Activated CD4-positive, alpha-beta T cell treated with anti-CD3 and anti-CD28 coated beads for 36 hours (primary cell): ENCODE measurements at regions of chr1 and their contacts with region 1.

Region 1: DNA sequence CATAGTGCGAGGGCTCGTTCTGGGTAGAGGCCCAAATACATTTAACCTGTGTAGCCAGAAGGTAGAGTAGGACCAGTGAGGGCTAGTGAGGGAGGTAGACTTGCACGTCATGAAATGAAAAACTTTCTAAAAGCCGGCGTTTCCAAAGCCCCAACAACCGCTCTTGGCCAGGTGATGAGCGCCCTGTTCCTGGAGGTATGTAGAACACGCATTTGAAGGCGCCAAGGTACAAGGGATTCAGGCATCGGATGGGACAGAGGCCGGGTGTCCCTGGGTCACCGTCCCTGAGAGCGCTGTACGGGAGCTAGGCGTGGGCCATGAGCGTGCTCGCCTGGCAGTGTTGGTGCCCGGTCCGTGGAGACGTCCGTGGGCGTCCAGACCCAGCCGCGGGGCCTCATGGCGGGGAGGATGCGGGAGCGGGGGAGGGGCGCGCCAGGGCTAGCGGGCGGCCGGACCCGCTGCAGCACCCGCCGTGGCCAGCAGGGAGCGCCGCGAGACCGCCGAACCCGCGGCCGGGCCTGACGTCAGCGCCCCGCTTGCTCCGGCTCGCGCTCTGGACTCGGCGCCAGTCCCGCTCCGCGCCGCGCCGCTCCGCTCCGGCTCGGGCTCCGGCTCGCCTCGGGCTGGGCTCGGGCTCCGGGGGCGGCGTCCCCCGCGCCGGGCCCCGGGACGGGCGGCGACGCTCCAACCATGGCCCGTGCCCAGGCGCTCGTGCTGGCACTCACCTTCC is at the start of gene PTPRU:
- DNase-seq: peak; percentile 91
- ATAC-seq: peak; percentile 85
- H3K4me3 Mint-ChIP-seq: peak within 1 kb of the TSS; percentile 63
- H3K27ac Mint-ChIP-seq: no peak within 1 kb of the TSS
- H3K4me1 Mint-ChIP-seq: peaks cover 15% of the 10 kb centered on the region
- H3K27me3 Mint-ChIP-seq: peaks cover 44% of the 10 kb centered on the region
- total RNA-seq, gene PTPRU: 0.37 to 0.89 TPM

Region 2: GRCh38 chr1:29259802-29260441 is 23.8 kb after region 1 on chr1:
- CTCF ChIA-PET with region 1: interaction called, 3 read pairs
- POLR2A ChIA-PET with region 1: no interaction called
- intact Hi-C with region 1: loop called in 1 of 2 experiments (anchors 1 kb)
- DNase-seq: peak; percentile 69
- ATAC-seq: peak; percentile 63
- H3K4me3 Mint-ChIP-seq: peak overlapping the region; percentile 68
- H3K27ac Mint-ChIP-seq: no peak overlapping the region
- H3K4me1 Mint-ChIP-seq: peaks cover 7% of the 10 kb centered on the region
- H3K27me3 Mint-ChIP-seq: peaks cover 35% of the 10 kb centered on the region

Region 3: DNA sequence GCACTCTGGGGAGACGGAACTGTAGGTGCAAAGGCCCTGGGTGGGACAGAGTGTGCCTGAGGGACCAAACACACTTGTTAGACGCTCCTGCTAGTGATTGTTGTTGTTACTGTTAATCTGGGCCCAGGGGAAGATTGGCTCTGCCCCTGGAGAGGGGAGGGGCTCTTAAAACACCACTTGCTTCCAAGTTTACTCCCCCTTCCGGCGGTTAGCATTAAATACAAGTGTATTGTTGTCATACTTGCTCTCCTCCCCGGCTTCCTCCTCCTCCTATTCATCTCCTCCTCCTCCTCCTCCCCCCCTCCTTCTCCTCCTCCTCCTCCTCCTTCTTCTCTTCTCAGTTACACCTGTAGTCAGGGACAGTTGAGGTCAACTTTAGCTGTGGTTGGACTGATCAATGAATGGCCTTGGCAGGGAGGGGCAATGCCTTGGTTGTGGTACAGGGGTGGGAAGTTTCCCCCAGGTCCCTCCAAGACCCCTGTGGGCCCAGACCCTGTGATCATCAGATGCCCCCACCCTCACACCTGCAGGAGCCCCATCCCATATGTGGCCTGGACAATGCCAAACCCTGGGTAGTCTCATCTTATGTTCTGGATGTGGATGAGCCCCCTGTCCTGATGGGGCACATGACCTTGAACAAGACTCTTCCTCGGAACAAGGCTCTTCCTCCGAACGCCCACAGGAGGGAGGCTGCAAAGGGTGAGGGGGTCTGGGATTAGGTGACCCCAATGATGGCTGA is 217.6 kb after region 1 on chr1:
- CTCF ChIA-PET with region 1: no interaction called
- POLR2A ChIA-PET with region 1: no interaction called
- intact Hi-C with region 1: loop called in 1 of 2 experiments (anchors 5 kb)
- DNase-seq: peak; percentile 9
- ATAC-seq: no peak
- H3K4me3 Mint-ChIP-seq: no peak overlapping the region
- H3K27ac Mint-ChIP-seq: no peak overlapping the region
- H3K4me1 Mint-ChIP-seq: no peaks in the 10 kb centered on the region
- H3K27me3 Mint-ChIP-seq: peaks cover 2% of the 10 kb centered on the region

Region 4: GRCh38 chr1:29849038-29849750 is 613.1 kb after region 1 on chr1:
- CTCF ChIA-PET with region 1: no interaction called
- POLR2A ChIA-PET with region 1: no interaction called
- intact Hi-C with region 1: loop called (anchors 1 to 2 kb)
- DNase-seq: peak; percentile 69
- ATAC-seq: peak; percentile 73
- H3K4me3 Mint-ChIP-seq: no peak overlapping the region
- H3K27ac Mint-ChIP-seq: no peak overlapping the region
- H3K4me1 Mint-ChIP-seq: no peaks in the 10 kb centered on the region
- H3K27me3 Mint-ChIP-seq: peaks cover 13% of the 10 kb centered on the region

Region 5: DNA sequence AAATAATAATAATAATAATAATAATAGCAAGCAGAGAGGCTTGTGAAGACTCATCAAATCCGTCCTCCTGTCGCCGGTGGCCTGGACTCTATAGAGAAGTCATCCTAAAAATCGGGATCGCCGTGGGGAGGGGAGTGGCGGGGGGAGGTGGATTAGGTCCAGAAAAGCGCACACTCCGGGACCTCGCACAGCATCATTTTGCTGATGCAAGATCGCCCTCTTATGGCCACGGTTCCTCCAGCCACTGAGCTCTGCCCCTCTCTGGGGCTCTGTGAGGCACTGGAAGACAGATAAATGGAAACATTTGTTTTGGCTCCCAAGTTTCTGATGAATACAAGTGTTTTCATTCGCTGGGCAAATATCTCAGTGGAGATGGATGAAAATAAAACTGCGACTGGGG is 875.3 kb after region 1 on chr1:
- CTCF ChIA-PET with region 1: no interaction called
- POLR2A ChIA-PET with region 1: no interaction called
- intact Hi-C with region 1: loop called in 1 of 2 experiments (anchors 2 kb)
- DNase-seq: peak; percentile 64
- ATAC-seq: peak; percentile 64
- H3K4me3 Mint-ChIP-seq: no peak overlapping the region
- H3K27ac Mint-ChIP-seq: no peak overlapping the region
- H3K4me1 Mint-ChIP-seq: no peaks in the 10 kb centered on the region
- H3K27me3 Mint-ChIP-seq: peaks cover 41% of the 10 kb centered on the region

Region 6: DNA sequence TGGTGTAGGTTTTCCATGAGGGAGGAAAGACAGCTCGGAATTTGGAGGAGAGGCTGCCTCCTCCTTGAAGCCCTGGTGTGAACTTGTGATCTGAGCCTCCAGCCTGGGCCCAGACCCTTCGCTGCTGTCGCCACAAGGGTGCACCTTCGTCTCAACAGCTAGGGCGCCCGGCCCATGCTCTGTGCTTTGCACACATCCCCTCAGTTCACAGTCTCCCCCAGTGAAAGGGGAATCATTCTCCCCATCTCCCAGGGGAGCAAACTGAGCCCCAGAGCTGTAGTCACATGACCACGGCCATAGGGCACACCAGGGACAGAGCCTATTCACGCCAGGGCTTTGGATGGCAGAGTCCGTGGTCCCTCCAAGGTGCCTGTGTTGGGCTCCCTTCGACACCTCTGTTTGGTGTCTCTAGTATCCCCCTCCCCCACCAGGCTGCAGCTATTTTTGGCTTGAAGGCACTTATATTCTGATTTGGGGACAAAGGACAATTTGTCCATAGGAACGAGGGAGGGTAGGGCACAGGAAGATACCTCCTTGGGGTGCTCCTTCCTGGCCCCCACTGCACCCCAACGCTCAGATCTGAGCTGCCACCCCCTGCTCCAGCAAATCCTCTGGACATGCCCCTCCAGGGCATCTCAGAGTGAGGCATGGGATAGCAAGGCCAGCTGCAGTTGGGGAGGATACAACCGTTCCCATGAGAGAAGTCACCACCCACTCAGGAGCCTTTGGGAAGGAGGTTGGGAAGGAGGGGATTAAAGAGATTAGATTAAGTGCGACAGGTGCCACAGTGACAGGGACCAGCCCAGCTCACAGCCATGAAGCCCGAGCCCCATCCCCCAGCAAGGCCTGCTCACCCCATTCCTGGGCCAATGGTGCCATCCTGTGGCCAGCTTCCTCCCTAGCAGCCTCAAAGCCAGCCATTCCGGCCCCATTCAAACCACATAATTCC is 1471.6 kb after region 1 on chr1:
- CTCF ChIA-PET with region 1: interaction called, 4 read pairs
- POLR2A ChIA-PET with region 1: no interaction called
- intact Hi-C with region 1: loop called in 1 of 2 experiments (anchors 1 kb)
- DNase-seq: peak; percentile 84
- ATAC-seq: peak; percentile 91
- H3K4me3 Mint-ChIP-seq: no peak overlapping the region
- H3K27ac Mint-ChIP-seq: no peak overlapping the region
- H3K4me1 Mint-ChIP-seq: no peaks in the 10 kb centered on the region
- H3K27me3 Mint-ChIP-seq: peaks cover 2% of the 10 kb centered on the region